ENCODE measurements at regions of chr3 and their contacts with region 1.

Region 1: GRCh38 chr3:10263646-10264363 is 15.5 kb downstream of the TATDN2 start:
- DNase-seq: peak; percentile 74 to 82 (median 77)
- ATAC-seq: peak; percentile 99
- H3K4me3 ChIP-seq: no peak overlapping the region
- H3K27ac ChIP-seq: peak overlapping the region; percentile 40; the same call in 2 of the 3 replicates
- H3K4me1 ChIP-seq: peaks cover 7 to 10% of the 10 kb centered on the region in 2 experiments; a peak in 4 of 5 replicates
- H3K27me3 ChIP-seq: no peaks in the 10 kb centered on the region
- CTCF ChIP-seq: peak; percentile 53 to 79 (median 65)
- EP300 ChIP-seq: no peak
- POLR2A ChIP-seq: no peak
- RAD21 ChIP-seq: peak in 1 of 2 experiments; percentile 51; a peak in 2 of 4 replicates

Region 2: GRCh38 chr3:10248184-10249080 is 15.4 kb before region 1 on chr3 and contains the start of gene TATDN2:
- CTCF ChIA-PET with region 1: no interaction called
- POLR2A ChIA-PET with region 1: interaction called, 14 read pairs
- in situ Hi-C with region 1: no loop called
- intact Hi-C with region 1: no loop called
- DNase-seq: peak; percentile 99 to 100 (median 100)
- ATAC-seq: peak; percentile 99
- H3K4me3 ChIP-seq: peak within 1 kb of the TSS; percentile 81
- H3K27ac ChIP-seq: peak within 1 kb of the TSS; percentile 86
- H3K4me1 ChIP-seq: peaks cover 10 to 21% of the 10 kb centered on the region in 2 experiments
- H3K27me3 ChIP-seq: no peaks in the 10 kb centered on the region
- CTCF ChIP-seq: peak in 1 of 3 experiments; percentile 31; a peak in 2 of 6 replicates
- EP300 ChIP-seq: no peak
- POLR2A ChIP-seq: peak; percentile 60
- RAD21 ChIP-seq: peak; percentile 5 to 16; a peak in 1 of 4 replicates
- polyA plus RNA-seq, gene TATDN2: 5.2 to 7.9 TPM

Region 3: DNA sequence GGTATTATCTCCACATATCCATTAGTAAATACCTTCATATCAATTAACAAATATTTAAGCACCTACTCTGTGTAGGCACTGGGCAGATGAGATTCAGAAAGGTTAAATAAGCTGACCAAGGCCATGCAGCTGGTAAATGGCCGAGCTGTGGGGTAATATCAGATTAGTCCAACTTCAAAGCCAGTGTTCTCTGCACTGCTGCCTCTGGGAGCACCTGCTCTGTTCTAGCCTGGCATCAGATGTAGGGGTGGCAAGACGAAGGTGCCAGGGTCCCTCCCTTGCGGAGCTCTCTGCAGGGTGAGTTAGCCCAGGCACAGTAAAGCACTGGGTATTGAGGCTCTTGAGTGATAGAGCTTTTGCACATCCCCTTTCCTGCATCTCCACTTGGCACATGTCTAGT is 10.1 kb before region 1 on chr3:
- CTCF ChIA-PET with region 1: no interaction called
- POLR2A ChIA-PET with region 1: interaction called, 14 read pairs
- in situ Hi-C with region 1: no loop called
- intact Hi-C with region 1: no loop called
- DNase-seq: no peak
- ATAC-seq: no peak
- H3K4me3 ChIP-seq: no peak overlapping the region
- H3K27ac ChIP-seq: no peak overlapping the region
- H3K4me1 ChIP-seq: peaks cover 9 to 10% of the 10 kb centered on the region in 2 experiments; a peak in 4 of 5 replicates
- H3K27me3 ChIP-seq: no peaks in the 10 kb centered on the region
- CTCF ChIP-seq: no peak
- EP300 ChIP-seq: no peak
- POLR2A ChIP-seq: no peak
- RAD21 ChIP-seq: no peak

Region 4: GRCh38 chr3:11134794-11135193 is 871.0 kb after region 1 on chr3:
- CTCF ChIA-PET with region 1: no interaction called
- POLR2A ChIA-PET with region 1: no interaction called
- in situ Hi-C with region 1: no loop called
- intact Hi-C with region 1: no loop called
- DNase-seq: no peak
- ATAC-seq: no peak
- H3K4me3 ChIP-seq: no peak overlapping the region
- H3K27ac ChIP-seq: no peak overlapping the region
- H3K4me1 ChIP-seq: no peaks in the 10 kb centered on the region
- H3K27me3 ChIP-seq: peaks cover 10 to 32% of the 10 kb centered on the region in 2 experiments; a peak in 3 of 5 replicates
- CTCF ChIP-seq: no peak
- EP300 ChIP-seq: no peak
- POLR2A ChIP-seq: no peak
- RAD21 ChIP-seq: no peak

Region 5: GRCh38 chr3:11928381-11928780 is 1664.6 kb after region 1 on chr3:
- CTCF ChIA-PET with region 1: no interaction called
- POLR2A ChIA-PET with region 1: no interaction called
- in situ Hi-C with region 1: no loop called
- intact Hi-C with region 1: no loop called
- DNase-seq: no peak
- ATAC-seq: no peak
- H3K4me3 ChIP-seq: no peak overlapping the region
- H3K27ac ChIP-seq: no peak overlapping the region
- H3K4me1 ChIP-seq: no peaks in the 10 kb centered on the region
- H3K27me3 ChIP-seq: peaks cover 0 to 22% of the 10 kb centered on the region in 2 experiments; a peak in 3 of 5 replicates
- CTCF ChIP-seq: no peak
- EP300 ChIP-seq: no peak
- POLR2A ChIP-seq: no peak
- RAD21 ChIP-seq: no peak

Measured in K562 (cell line).